WTC11 (cell line): ENCODE measurements at regions of chr12 and their contacts with region 1.

Region 1: GRCh38 chr12:67943226-67943892 is 45.9 kb upstream of the IFNG-AS1 start:
- DNase-seq: peak; percentile 42
- ATAC-seq: peak; percentile 88
- H3K4me3 Mint-ChIP-seq: no peak overlapping the region
- H3K27ac Mint-ChIP-seq: no peak overlapping the region; the same call in 1 of the 2 replicates
- H3K4me1 Mint-ChIP-seq: peaks cover 27% of the 10 kb centered on the region
- H3K27me3 Mint-ChIP-seq: no peaks in the 10 kb centered on the region
- CTCF ChIP-seq: peak; percentile 42; the same call in 1 of the 2 replicates

Region 2: DNA sequence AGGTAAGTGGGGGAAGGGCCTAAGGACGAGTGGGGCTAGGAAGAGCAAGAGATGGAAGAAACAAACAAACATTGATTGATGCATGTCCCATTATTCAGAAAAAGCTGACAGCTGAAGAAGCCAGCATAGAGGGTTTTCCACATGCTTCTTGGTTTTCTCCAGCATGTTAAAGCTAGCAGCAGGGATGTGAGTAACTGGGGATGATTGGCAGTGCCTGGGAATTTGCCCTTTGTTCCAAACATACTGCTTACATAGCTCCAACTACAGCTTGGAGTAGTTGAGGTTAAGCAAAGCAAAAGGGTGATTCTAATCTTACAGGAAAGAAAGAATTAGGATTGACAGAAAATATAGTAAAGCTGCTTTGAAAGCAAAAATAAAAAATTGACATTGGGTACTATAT is 22.1 kb before region 1 on chr12:
- CTCF ChIA-PET with region 1: interaction called, 15 read pairs
- POLR2A ChIA-PET with region 1: no interaction called
- DNase-seq: no peak
- ATAC-seq: 0 out of 2 replicates have a peak, but pooled peaks have one; percentile 15
- H3K4me3 Mint-ChIP-seq: no peak overlapping the region
- H3K27ac Mint-ChIP-seq: no peak overlapping the region
- H3K4me1 Mint-ChIP-seq: peaks cover 35% of the 10 kb centered on the region
- H3K27me3 Mint-ChIP-seq: no peaks in the 10 kb centered on the region
- CTCF ChIP-seq: no peak